Activated T-helper 2 cell treated with anti-CD3 and anti-CD28 coated beads, Interferon-gamma antibody, Interleukin-2, Interleukin-4, amounts not matched to agents 10 μg/mL and 5 μg/mL and 100 μg/mL, durations not matched to agents 14 hours and 24 hours and 36 hours (primary cell): ENCODE measurements at regions of chr13 and their contacts with region 1.

Region 1: DNA sequence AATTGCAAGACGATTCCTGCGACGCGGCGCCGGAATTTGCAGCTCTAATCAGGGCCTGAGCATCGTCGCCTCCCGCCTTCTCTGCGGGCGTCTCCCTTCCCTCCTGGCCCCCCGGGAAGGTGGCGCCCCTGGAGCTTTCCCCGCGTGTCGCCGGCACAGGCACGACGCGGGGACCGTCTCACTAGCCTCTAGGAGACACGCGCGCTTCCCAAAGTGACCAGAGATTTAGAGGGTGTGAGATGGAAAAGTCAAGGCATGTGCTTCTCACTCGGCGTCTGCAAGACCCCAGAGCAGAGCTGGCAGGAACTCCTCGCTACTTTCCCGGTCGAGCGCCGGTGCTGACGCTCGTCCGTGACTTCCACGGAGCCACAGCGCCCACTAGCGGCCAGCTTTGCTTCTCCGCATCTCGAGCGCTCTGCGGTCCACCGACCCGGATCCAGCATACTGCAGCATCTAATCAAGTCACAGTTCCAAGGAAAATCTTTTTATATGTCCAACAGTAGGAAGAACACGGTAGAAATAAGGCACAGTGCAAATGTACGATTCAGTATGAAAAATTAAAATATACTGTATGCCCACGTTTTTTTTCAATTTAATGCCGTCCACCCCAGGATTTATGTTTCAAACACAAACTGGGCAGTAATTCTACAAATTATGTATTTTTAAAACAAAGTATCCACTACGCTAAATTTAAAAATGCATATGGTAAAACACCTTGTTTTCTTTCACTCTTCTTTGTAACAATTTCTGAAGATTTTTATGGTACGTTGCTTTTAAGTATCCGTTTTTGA is 977 bp upstream of the EFNB2 start:
- DNase-seq: peak; percentile 74
- H3K4me3 Mint-ChIP-seq: peak overlapping the region; percentile 90
- H3K27ac Mint-ChIP-seq: no peak overlapping the region
- H3K4me1 Mint-ChIP-seq: peaks cover 17% of the 10 kb centered on the region
- H3K27me3 Mint-ChIP-seq: peaks cover 27% of the 10 kb centered on the region

Region 2: GRCh38 chr13:105139380-105140285 is 1396.8 kb before region 1 on chr13:
- intact Hi-C with region 1: loop called (anchors 10 kb)
- DNase-seq: peak; percentile 64
- H3K4me3 Mint-ChIP-seq: peak overlapping the region; percentile 83
- H3K27ac Mint-ChIP-seq: peak overlapping the region; percentile 92
- H3K4me1 Mint-ChIP-seq: peaks cover 23% of the 10 kb centered on the region
- H3K27me3 Mint-ChIP-seq: no peaks in the 10 kb centered on the region

Region 3: GRCh38 chr13:106083620-106084350 is 452.7 kb before region 1 on chr13:
- intact Hi-C with region 1: loop called (anchors 5 kb)
- DNase-seq: no peak
- H3K4me3 Mint-ChIP-seq: no peak overlapping the region
- H3K27ac Mint-ChIP-seq: no peak overlapping the region
- H3K4me1 Mint-ChIP-seq: no peaks in the 10 kb centered on the region
- H3K27me3 Mint-ChIP-seq: no peaks in the 10 kb centered on the region

Region 4: GRCh38 chr13:106561551-106562170 is 25.2 kb after region 1 on chr13:
- intact Hi-C with region 1: loop called (anchors 1 kb)
- DNase-seq: no peak
- H3K4me3 Mint-ChIP-seq: peak overlapping the region; percentile 10
- H3K27ac Mint-ChIP-seq: peak overlapping the region; percentile 72
- H3K4me1 Mint-ChIP-seq: peaks cover 52% of the 10 kb centered on the region
- H3K27me3 Mint-ChIP-seq: no peaks in the 10 kb centered on the region

Region 5: DNA sequence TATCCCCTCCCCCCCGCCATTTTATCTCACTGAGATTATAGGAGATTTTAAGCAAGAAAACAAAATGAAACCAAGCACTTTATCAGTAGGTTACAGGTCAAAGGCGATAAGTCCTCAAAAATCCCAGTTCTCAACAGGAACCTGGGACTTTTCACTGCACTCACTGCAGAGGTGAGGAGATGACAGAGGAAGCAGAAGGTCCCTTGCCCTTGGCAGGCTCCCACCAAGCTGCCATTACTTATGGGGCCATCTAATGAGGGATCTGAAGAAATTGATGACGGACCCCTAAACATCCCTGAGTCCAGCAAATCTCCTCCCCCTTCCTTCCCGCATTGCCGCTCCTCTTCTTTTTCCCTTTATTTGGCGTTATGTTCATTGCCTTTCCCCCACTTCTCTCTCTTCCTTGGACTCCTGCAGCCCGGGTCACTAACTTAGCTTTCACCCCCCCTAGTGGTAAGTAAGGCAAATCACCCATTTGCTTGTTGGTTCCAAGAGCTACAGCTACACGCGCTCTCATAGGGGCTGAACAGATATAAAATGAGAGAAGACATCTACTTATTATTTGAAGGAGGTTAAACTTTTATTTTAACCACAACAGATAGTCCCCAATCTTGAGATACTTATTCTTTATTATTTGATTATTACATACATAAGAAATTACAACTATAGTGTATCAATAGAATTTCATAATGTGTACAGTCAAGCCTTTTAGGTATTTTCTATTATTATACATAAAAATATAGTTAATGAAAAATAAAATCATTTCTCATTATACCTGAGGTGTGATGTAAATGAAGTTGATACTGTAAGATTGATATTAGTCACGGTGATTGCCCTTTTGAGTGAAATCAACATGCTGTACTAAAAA is 83.5 kb after region 1 on chr13:
- intact Hi-C with region 1: loop called (anchors 5 kb)
- DNase-seq: no peak
- H3K4me3 Mint-ChIP-seq: no peak overlapping the region
- H3K27ac Mint-ChIP-seq: no peak overlapping the region
- H3K4me1 Mint-ChIP-seq: no peaks in the 10 kb centered on the region
- H3K27me3 Mint-ChIP-seq: peaks cover 27% of the 10 kb centered on the region